ENCODE measurements at regions of chr2 and their contacts with region 1.

Region 1: DNA sequence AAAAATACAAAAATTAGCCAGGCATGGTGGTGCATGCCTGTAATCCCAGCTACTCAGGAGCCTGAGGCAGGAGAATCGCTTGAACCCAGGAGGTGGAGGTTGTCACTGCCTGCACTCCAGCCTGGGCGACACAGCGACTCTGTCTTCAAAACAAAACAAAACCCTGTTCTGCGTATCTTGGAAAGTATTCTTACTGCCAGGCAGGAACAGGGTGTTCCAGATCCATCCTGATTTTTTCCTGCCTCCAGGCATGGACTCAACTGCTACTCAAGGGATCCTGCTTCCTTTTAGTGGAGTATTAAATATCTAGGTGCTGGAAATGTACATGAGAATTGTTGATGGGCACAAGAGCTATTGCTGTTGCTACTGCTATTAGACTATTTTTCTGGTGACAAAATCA is 12.3 kb downstream of the HSPD1 start:
- DNase-seq: no peak
- H3K4me3 Mint-ChIP-seq: no peak overlapping the region
- H3K27ac Mint-ChIP-seq: no peak overlapping the region
- H3K4me1 Mint-ChIP-seq: no peaks in the 10 kb centered on the region
- H3K27me3 Mint-ChIP-seq: no peaks in the 10 kb centered on the region
- CTCF ChIP-seq: no peak

Region 2: GRCh38 chr2:197399887-197400540 is 87.4 kb before region 1 on chr2:
- CTCF ChIA-PET with region 1: no interaction called
- intact Hi-C with region 1: loop called (anchors 5 kb)
- DNase-seq: no peak
- H3K4me3 Mint-ChIP-seq: no peak overlapping the region
- H3K27ac Mint-ChIP-seq: no peak overlapping the region
- H3K4me1 Mint-ChIP-seq: peaks cover 11% of the 10 kb centered on the region
- H3K27me3 Mint-ChIP-seq: no peaks in the 10 kb centered on the region
- CTCF ChIP-seq: no peak